ENCODE measurements at regions of chr18 and their contacts with region 1.

Region 1: GRCh38 chr18:50726960-50727589 is 92.7 kb downstream of the MRO start:
- DNase-seq: no peak
- ATAC-seq: peak in 6 of 8 donors; percentile 7 to 57 (median 34)
- H3K4me3 ChIP-seq: no peak overlapping the region
- H3K27ac ChIP-seq: peak overlapping the region; percentile 36 to 80 (median 69)
- H3K4me1 ChIP-seq: peaks cover 4 to 43% (median 22%) of the 10 kb centered on the region in 9 donors
- H3K27me3 ChIP-seq: peaks cover 0 to 4% (median 0%) of the 10 kb centered on the region in 7 donors
- CTCF ChIP-seq: no peak

Region 2: DNA sequence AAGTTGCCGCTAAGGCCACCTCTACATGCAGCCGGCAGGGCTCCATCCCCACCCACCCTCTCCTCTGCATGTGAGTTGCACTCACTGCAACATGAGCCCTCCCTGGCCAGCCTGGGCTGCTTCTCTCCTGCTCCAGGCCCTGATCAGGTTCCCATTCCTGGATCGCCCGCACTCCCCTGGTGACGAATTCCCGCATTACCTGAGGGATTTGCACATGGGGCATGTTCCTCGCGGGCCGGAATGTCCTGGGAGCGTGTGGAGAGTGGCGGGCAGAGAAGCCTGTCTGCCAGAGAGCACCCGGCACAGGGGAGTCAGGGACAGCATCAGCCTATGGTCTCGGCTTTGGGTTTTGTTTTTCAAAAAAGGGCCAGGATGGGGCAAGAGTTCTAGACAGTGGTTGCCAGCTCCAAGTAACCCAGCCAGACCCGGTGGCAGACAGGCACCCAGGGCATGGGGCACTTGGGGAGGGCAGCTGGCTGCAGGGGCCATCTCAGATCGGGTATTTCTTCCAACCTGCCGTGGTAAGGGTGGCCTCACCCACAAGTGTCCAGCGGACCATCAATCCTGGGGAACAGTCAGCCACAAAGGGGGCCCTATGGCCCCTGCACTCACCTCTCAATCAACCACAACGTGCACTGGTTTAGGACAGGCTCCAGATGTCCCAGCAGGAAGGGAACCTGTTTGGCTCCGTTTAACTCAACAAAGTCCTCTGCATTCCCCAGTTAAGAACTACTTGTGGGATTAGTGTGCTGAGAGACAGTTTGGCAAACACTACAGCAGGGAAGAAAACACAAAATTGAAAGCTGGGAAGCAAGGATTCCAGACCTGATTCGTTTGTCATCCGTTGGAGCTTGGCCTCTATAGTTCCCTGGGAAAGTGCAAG is 1964.0 kb before region 1 on chr18:
- intact Hi-C with region 1: loop called in 1 of 10 experiments (anchors 5 kb)
- DNase-seq: no peak
- ATAC-seq: peak in 1 of 8 donors; percentile 45
- H3K4me3 ChIP-seq: no peak overlapping the region
- H3K27ac ChIP-seq: peak overlapping the region in 9 of 10 donors; percentile 14 to 79 (median 55)
- H3K4me1 ChIP-seq: peaks cover 11 to 77% (median 50%) of the 10 kb centered on the region in 9 donors
- H3K27me3 ChIP-seq: no peaks in the 10 kb centered on the region
- CTCF ChIP-seq: no peak

Region 3: GRCh38 chr18:50674307-50674706 is 52.8 kb before region 1 on chr18:
- intact Hi-C with region 1: no loop called
- DNase-seq: peak in 1 of 2 donors; percentile 38
- ATAC-seq: peak; percentile 67 to 95 (median 80)
- H3K4me3 ChIP-seq: no peak overlapping the region
- H3K27ac ChIP-seq: peak overlapping the region; percentile 17 to 86 (median 68)
- H3K4me1 ChIP-seq: peaks cover 0 to 19% (median 5%) of the 10 kb centered on the region in 9 donors
- H3K27me3 ChIP-seq: peaks cover 0 to 3% (median 0%) of the 10 kb centered on the region in 7 donors
- CTCF ChIP-seq: no peak

Measured in heart right ventricle (tissue), 16 donors.